ENCODE measurements at regions of chr11 and their contacts with region 1.

Region 1: GRCh38 chr11:75399344-75400145 is at the start of gene RPS3:
- DNase-seq: peak; percentile 93
- H3K4me3 Mint-ChIP-seq: peak within 1 kb of the TSS; percentile 95
- H3K27ac Mint-ChIP-seq: peak within 1 kb of the TSS; percentile 99
- H3K4me1 Mint-ChIP-seq: peaks cover 29% of the 10 kb centered on the region
- H3K27me3 Mint-ChIP-seq: no peaks in the 10 kb centered on the region
- CTCF ChIP-seq: no peak
- total RNA-seq, gene RPS3: 3,172 and 3,444 TPM in 2 replicates

Region 2: DNA sequence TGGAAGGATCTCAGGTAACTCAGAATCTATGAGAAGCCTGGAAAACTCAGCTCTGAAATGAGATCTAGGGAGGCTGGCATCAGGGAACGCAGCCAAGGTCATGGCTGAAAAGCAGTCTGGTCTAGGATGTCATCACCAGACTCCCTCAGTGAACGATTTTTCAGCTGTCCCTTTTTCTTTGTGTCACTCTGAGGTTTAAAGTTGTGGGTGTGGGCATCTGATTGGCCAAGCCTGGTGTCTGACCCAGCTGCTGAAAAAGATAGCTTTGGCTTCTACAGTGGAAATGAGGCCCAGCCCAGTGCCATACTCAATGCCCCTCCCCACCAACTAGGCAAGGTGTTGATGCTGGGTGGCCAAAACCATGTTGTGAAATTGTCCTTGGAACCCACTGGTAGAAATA is 14.3 kb after region 1 on chr11:
- CTCF ChIA-PET with region 1: interaction called, 8 read pairs
- POLR2A ChIA-PET with region 1: interaction called, 14 read pairs
- intact Hi-C with region 1: no loop called
- DNase-seq: no peak
- H3K4me3 Mint-ChIP-seq: no peak overlapping the region
- H3K27ac Mint-ChIP-seq: no peak overlapping the region
- H3K4me1 Mint-ChIP-seq: peaks cover 4% of the 10 kb centered on the region
- H3K27me3 Mint-ChIP-seq: no peaks in the 10 kb centered on the region
- CTCF ChIP-seq: no peak

Region 3: GRCh38 chr11:75422253-75423231 is 23.0 kb after region 1 on chr11:
- CTCF ChIA-PET with region 1: interaction called, 4 read pairs
- POLR2A ChIA-PET with region 1: interaction called, 12 read pairs
- intact Hi-C with region 1: no loop called
- DNase-seq: no peak
- H3K4me3 Mint-ChIP-seq: no peak overlapping the region
- H3K27ac Mint-ChIP-seq: peak overlapping the region; percentile 42
- H3K4me1 Mint-ChIP-seq: peaks cover 6% of the 10 kb centered on the region
- H3K27me3 Mint-ChIP-seq: no peaks in the 10 kb centered on the region
- CTCF ChIP-seq: no peak

Region 4: GRCh38 chr11:75428281-75428724 is 28.8 kb after region 1 on chr11:
- CTCF ChIA-PET with region 1: interaction called, 4 read pairs
- POLR2A ChIA-PET with region 1: interaction called, 10 read pairs
- intact Hi-C with region 1: no loop called
- DNase-seq: peak; percentile 90
- H3K4me3 Mint-ChIP-seq: peak overlapping the region; percentile 76
- H3K27ac Mint-ChIP-seq: peak overlapping the region; percentile 73
- H3K4me1 Mint-ChIP-seq: no peaks in the 10 kb centered on the region
- H3K27me3 Mint-ChIP-seq: peaks cover 32% of the 10 kb centered on the region
- CTCF ChIP-seq: no peak

Region 5: GRCh38 chr11:75543806-75544205 is 144.3 kb after region 1 on chr11:
- CTCF ChIA-PET with region 1: no interaction called
- POLR2A ChIA-PET with region 1: no interaction called
- intact Hi-C with region 1: no loop called
- DNase-seq: no peak
- H3K4me3 Mint-ChIP-seq: no peak overlapping the region
- H3K27ac Mint-ChIP-seq: no peak overlapping the region
- H3K4me1 Mint-ChIP-seq: peaks cover 5% of the 10 kb centered on the region
- H3K27me3 Mint-ChIP-seq: no peaks in the 10 kb centered on the region
- CTCF ChIP-seq: no peak

Region 6: GRCh38 chr11:75562048-75562835 is 162.7 kb after region 1 on chr11 and contains the start of gene SERPINH1:
- CTCF ChIA-PET with region 1: interaction called, 5 read pairs
- POLR2A ChIA-PET with region 1: interaction called, 15 read pairs
- intact Hi-C with region 1: no loop called
- DNase-seq: peak; percentile 83
- H3K4me3 Mint-ChIP-seq: peak within 1 kb of the TSS; percentile 92
- H3K27ac Mint-ChIP-seq: peak within 1 kb of the TSS; percentile 94
- H3K4me1 Mint-ChIP-seq: peaks cover 41% of the 10 kb centered on the region
- H3K27me3 Mint-ChIP-seq: no peaks in the 10 kb centered on the region
- CTCF ChIP-seq: no peak
- total RNA-seq, gene SERPINH1: 80.5 TPM in 2 replicates

Measured in MCF 10A (cell line).